GM10248 (cell line): ENCODE measurements at regions of chr6 and their contacts with region 1.

Region 1: GRCh38 chr6:4155848-4156466 is 20.6 kb upstream of the ECI2 start:
- DNase-seq: peak; percentile 74
- CTCF ChIP-seq: peak; percentile 76

Region 2: DNA sequence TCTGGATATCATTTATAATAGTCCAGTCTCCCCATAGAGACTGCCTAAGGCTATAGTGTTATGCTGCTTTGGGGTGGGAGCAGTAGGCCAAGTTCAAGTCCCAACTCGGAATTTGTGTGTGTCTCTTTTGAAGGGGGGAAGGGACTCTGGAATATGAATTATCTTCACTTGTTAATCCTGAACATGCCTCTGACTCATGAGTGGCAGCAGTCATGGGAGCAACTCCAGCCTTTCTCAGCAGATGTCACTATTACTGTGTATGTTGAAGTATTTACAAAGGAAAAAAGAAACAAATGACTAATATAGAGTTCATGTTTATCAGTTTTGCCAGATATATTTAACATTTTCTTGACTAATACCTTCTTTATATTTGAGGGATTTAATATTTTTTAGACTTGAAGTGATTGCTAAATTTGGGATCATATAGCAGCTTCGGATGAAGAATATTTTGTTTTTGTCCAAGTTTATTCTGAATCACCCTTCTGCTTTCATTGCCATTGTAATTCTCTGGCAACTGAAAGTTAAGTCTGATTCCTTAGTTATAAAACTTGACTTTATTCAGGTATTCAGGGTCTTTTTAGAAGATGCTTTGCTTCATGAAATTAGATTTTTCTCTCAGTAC is 100.4 kb before region 1 on chr6:
- CTCF ChIA-PET with region 1: interaction called, 10 read pairs
- POLR2A ChIA-PET with region 1: no interaction called
- DNase-seq: no peak
- CTCF ChIP-seq: no peak

Region 3: DNA sequence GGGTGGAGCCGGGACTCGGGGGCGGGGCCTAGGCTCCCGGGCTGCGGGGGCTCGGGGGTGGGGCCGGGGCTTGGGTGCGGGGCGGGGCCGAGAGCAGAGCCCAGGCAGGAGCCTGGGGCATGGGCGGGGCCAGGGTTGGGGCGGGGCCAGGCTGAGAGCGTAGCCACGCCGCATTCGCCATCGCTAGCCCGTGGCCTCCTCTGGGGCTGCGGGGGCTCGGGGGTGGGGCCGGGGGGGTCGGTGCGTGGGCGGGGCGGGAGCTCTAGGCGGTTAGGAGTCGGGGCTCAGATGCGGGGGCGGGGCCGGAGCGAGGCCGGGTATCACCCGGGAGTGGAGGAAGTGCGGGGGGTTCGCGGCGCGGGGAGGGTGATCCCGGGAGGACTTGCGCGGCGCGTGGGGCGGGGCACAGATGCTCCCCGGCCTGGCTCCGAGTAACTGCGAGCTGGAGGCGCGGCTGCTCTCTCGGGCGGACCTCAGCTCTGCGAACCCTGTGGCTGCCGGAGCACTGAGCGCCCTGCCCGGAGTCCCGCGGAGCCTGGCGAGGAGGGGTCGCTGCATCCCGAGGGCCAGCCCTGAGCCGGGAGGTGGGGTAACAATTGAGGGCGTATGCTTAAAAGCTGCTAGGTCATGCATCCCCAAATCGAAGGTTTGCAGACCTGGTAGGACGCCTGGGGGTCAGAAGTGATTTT is 20.1 kb before region 1 on chr6:
- CTCF ChIA-PET with region 1: interaction called, 20 read pairs
- POLR2A ChIA-PET with region 1: no interaction called
- DNase-seq: peak; percentile 99
- CTCF ChIP-seq: no peak

Region 4: GRCh38 chr6:4178737-4179333 is 22.9 kb after region 1 on chr6:
- CTCF ChIA-PET with region 1: interaction called, 10 read pairs
- POLR2A ChIA-PET with region 1: no interaction called
- DNase-seq: no peak
- CTCF ChIP-seq: no peak